Left cardiac atrium (tissue), 4 donors: ENCODE measurements at regions of chr19 and their contacts with region 1.

Region 1: DNA sequence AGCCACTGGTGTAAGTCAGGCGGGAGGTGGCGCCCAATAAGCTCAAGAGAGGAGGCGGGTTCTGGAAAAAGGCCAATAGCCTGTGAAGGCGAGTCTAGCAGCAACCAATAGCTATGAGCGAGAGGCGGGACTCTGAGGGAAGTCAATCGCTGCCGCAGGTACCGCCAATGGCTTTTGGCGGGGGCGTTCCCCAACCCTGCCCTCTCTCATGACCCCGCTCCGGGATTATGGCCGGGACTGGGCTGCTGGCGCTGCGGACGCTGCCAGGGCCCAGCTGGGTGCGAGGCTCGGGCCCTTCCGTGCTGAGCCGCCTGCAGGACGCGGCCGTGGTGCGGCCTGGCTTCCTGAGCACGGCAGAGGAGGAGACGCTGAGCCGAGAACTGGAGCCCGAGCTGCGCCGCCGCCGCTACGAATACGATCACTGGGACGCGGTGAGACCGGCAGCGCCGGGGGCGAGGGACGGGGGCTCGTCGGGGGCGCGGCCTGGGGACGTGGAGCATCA is at the start of gene ALKBH7:
- DNase-seq: peak; percentile 99
- ATAC-seq: peak; percentile 91 to 93
- total RNA-seq, gene ALKBH7: 93.7 to 107 TPM

Region 2: GRCh38 chr19:6737284-6738046 is 364.8 kb after region 1 on chr19 and contains the start of gene GPR108:
- intact Hi-C with region 1: loop called in 1 of 2 experiments (anchors 5 kb)
- DNase-seq: peak; percentile 100
- ATAC-seq: peak; percentile 83 to 86
- total RNA-seq, gene GPR108: 25.7 to 35.4 TPM